WTC11 (cell line): ENCODE measurements at regions of chr16 and their contacts with region 1.

Region 1: GRCh38 chr16:30065143-30065850 is at the start of gene ALDOA:
- DNase-seq: peak; percentile 92
- ATAC-seq: peak; percentile 86
- H3K4me3 Mint-ChIP-seq: peak within 1 kb of the TSS; percentile 96
- H3K27ac Mint-ChIP-seq: peak within 1 kb of the TSS; percentile 99
- H3K4me1 Mint-ChIP-seq: peaks cover 37% of the 10 kb centered on the region
- H3K27me3 Mint-ChIP-seq: no peaks in the 10 kb centered on the region
- CTCF ChIP-seq: no peak
- total RNA-seq, gene ALDOA: 1,537 to 1,958 TPM (median 1,913 TPM) in 3 replicates

Region 2: DNA sequence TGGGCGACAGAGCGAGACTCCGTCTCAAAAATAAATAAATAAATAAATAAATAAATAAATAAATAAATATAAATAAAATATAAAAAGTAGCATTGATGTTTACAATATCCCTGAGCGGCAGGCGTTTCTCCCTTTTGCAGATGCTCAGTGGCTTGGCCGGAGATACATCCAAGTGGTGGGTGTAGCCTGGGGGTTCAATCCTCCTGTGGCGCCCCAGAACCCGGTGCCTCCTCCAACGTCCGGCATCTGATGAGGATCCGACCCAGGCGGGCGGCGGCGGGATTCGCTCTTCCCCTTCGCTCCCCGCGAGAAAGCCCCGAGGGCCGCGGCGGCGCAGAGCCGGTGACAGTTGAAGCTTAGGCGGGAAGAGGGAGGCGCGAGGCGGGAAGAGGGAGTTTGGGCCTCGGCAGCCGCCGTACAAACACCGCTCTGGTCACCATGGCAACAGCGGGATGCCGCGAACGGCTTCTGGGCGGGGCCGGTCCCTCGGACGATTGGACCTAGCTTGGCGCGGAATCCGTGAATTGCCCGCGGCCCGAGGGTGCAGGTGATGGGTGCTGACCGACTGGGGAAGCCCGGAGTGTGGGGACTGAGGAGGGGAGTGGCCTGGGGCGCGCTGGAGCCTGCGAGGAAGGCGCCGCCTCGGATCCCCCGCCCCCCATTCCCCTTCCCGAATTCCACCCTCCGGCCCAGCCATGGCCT is 12.5 kb before region 1 on chr16:
- CTCF ChIA-PET with region 1: interaction called, 89 read pairs
- POLR2A ChIA-PET with region 1: interaction called, 5 read pairs
- DNase-seq: peak; percentile 94
- ATAC-seq: peak; percentile 60
- H3K4me3 Mint-ChIP-seq: peak overlapping the region; percentile 82
- H3K27ac Mint-ChIP-seq: no peak overlapping the region
- H3K4me1 Mint-ChIP-seq: peaks cover 14% of the 10 kb centered on the region
- H3K27me3 Mint-ChIP-seq: peaks cover 37% of the 10 kb centered on the region
- CTCF ChIP-seq: no peak

Region 3: GRCh38 chr16:30075507-30076275 is 10.4 kb after region 1 on chr16 and contains the start of gene PPP4C:
- CTCF ChIA-PET with region 1: interaction called, 10 read pairs
- POLR2A ChIA-PET with region 1: interaction called, 8 read pairs
- DNase-seq: peak; percentile 90
- ATAC-seq: peak; percentile 84
- H3K4me3 Mint-ChIP-seq: peak within 1 kb of the TSS; percentile 89
- H3K27ac Mint-ChIP-seq: peak within 1 kb of the TSS; percentile 97
- H3K4me1 Mint-ChIP-seq: peaks cover 22% of the 10 kb centered on the region
- H3K27me3 Mint-ChIP-seq: no peaks in the 10 kb centered on the region
- CTCF ChIP-seq: no peak
- total RNA-seq, gene PPP4C: 159 to 164 TPM (median 161 TPM) in 3 replicates

Region 4: DNA sequence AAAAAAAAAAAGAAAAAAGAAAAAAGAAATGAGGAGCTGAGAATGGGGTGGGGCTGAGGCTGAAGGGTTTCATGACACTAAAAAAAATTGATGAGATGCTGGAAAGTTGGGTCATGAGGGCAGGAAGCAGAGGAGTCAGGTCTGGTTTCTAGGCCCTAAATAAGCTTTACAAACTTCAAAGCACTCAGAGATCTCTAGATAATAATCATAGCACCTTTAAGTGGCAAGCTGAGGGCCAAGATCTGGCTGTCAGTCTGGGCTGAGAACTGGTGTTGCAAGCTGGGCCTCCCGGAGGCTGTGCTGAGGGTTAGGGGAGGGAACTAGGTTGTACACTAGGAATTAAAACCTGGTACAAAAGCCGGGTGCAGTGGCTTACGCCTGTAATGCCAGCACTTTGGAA is 486.5 kb after region 1 on chr16:
- CTCF ChIA-PET with region 1: no interaction called
- POLR2A ChIA-PET with region 1: no interaction called
- DNase-seq: no peak
- ATAC-seq: no peak
- H3K4me3 Mint-ChIP-seq: no peak overlapping the region
- H3K27ac Mint-ChIP-seq: no peak overlapping the region
- H3K4me1 Mint-ChIP-seq: peaks cover 27% of the 10 kb centered on the region
- H3K27me3 Mint-ChIP-seq: no peaks in the 10 kb centered on the region
- CTCF ChIP-seq: no peak